ENCODE measurements at regions of chr15 and their contacts with region 1.

Region 1: DNA sequence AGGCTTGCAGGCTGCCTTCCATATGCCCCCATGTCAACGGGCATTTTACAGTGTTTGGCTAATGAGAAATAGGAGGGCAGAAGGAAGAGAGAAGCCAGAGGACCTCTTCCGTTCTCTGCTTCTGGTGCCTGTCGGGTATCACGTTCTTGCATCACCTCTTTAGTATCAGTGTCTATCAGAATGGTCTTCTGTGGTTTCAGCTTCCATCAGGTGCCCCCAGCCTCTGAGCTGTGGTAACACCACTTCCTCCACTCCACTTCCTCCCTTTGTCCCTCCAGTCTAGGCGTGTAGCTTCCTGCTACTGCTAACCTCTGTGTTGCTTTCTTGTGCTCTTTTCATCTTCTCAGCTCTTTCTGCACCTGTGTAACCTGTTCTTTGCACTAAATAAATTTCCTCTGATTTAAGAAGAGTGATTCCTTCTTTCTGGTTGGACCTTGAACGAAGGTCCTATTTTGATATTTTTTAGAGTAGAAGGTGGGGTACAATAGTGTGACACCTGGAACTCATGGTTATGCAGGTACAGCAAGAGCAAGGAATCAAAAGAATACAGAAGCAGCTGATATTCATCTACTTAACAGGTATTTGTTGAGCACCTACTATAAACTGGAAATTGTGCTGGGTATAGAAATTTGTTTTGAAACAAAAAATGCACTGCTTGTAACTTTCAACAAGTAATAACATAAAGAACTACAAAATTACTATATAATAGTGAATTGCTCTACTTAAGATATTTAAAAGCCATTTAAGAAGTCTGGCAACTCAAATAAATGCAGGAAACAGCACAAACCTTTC is 27.4 kb upstream of the FOXB1 start:
- DNase-seq: no peak
- ATAC-seq: peak; percentile 24

Region 2: DNA sequence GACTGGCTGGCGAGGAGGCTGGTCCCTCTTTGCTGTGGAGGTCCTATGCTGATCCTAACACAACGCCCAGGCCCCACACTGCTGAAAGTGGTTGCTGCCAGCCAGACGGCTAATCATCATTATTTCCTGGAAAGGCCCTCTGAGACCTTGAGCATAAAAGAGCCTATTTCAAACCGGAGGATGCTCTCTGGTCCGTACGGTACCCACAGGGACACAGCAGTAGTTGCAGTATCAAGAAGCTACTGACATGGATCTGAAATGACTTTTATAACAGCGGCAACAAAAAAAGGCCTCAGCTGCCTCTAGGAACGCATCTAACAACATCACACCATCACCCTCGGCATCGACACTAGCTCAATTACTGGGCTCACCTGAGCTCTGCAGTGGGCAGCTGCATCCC is 31.6 kb before region 1 on chr15:
- intact Hi-C with region 1: loop called in 1 of 2 experiments (anchors 2 kb)
- DNase-seq: no peak
- ATAC-seq: no peak

Measured in left colon (tissue), 2 donors.